ENCODE measurements at regions of chr18 and their contacts with region 1.

Region 1: DNA sequence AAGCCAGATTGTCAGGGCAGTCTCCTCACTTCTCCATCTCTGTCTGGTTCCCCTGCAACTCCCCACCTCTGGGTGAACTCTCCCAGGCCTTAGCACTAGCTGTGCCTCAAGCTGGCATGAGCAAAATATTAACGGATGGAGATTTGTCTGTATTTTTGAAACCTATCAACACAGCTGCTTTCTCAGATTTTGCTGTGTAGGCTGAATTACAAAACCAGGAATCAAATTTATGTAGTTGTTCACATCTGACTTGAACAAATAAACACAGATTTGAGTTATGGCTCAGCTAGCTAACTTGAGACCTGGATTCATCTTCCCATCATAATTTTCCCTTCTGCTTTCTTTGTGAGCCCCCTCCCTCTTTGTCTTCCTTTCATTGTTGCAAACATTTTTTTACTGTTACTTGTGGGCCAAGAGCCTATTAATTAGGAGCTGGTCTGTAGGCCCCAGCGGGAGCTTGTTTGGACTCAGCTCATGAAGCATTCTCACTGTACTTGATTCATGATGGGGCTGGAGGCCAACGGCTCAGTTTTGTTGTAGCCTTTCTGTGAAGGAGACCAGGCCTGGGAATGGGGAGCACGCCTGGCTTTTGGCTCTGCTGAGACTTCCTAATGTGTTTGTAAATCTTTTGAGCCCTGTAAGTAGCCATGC is 164.1 kb upstream of the GATA6 start:
- DNase-seq: peak; percentile 46 to 86 (median 81)
- ATAC-seq: peak in 1 of 2 donors; percentile 76
- H3K4me3 ChIP-seq: no peak overlapping the region
- H3K27ac ChIP-seq: no peak overlapping the region
- H3K4me1 ChIP-seq: no peaks in the 10 kb centered on the region
- H3K27me3 ChIP-seq: no peaks in the 10 kb centered on the region

Region 2: GRCh38 chr18:21612125-21612991 is 393.0 kb before region 1 on chr18 and contains the start of gene SNRPD1:
- intact Hi-C with region 1: no loop called
- DNase-seq: peak; percentile 90 to 96 (median 95)
- ATAC-seq: peak; percentile 99
- H3K4me3 ChIP-seq: peak within 1 kb of the TSS; percentile 62
- H3K27ac ChIP-seq: peak within 1 kb of the TSS; percentile 6
- H3K4me1 ChIP-seq: no peaks in the 10 kb centered on the region
- H3K27me3 ChIP-seq: no peaks in the 10 kb centered on the region
- total RNA-seq, gene SNRPD1: 17.1 to 29.9 (median 25.4) TPM

Region 3: DNA sequence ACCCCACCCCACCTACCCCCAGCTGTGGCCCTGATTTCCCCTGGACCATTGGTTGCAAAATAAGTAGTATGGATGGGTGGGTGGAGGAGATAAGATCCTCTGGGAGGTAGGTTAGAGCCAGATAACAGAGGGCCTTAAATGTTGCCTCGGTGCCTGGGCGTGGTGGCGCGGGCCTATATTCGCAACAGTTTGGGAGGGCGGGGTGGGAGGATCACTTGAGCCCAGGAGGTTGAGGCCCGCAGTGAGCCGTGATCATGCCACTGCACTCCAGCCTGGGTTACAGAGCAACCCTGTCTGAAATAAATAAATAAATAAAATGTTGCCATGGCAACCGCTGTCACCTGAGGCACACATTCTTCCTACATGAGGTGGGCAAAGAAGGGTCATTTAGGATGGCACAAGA is 60.8 kb after region 1 on chr18:
- intact Hi-C with region 1: loop called in 1 of 4 experiments (anchors 10 kb)
- DNase-seq: no peak
- ATAC-seq: no peak
- H3K4me3 ChIP-seq: no peak overlapping the region
- H3K27ac ChIP-seq: no peak overlapping the region
- H3K4me1 ChIP-seq: no peaks in the 10 kb centered on the region
- H3K27me3 ChIP-seq: no peaks in the 10 kb centered on the region